WTC11 (cell line): ENCODE measurements at regions of chr14 and their contacts with region 1.

Region 1: GRCh38 chr14:72023722-72024407 is 91.6 kb downstream of the RGS6 start:
- DNase-seq: peak; percentile 44
- ATAC-seq: peak; percentile 82
- H3K4me3 Mint-ChIP-seq: peak overlapping the region; percentile 16; the same call in 1 of the 2 replicates
- H3K27ac Mint-ChIP-seq: no peak overlapping the region
- H3K4me1 Mint-ChIP-seq: peaks cover 8% of the 10 kb centered on the region
- H3K27me3 Mint-ChIP-seq: no peaks in the 10 kb centered on the region; the same call in 1 of the 2 replicates
- CTCF ChIP-seq: peak; percentile 74

Region 2: DNA sequence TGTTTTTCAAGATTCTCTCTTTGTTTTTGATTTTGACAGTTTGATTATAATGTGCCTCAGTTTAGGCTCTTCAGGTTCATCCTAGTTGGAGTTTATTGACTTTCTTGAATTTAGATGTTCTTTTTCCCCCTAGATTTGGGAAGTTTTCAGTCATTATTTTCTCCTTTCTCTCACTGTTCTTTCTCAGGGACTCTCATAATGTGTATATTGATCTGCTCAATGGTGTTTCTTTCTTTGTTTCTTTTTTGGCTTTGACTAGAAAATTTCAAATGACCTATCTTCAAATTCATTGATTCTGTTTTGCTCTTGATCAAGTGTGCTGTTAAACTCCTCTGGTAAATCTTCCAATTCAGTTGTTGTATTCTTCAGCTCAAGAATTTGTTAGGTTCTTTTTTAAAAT is 16.7 kb after region 1 on chr14:
- CTCF ChIA-PET with region 1: no interaction called
- POLR2A ChIA-PET with region 1: no interaction called
- DNase-seq: no peak
- ATAC-seq: no peak
- H3K4me3 Mint-ChIP-seq: no peak overlapping the region
- H3K27ac Mint-ChIP-seq: no peak overlapping the region
- H3K4me1 Mint-ChIP-seq: peaks cover 14% of the 10 kb centered on the region
- H3K27me3 Mint-ChIP-seq: no peaks in the 10 kb centered on the region; the same call in 1 of the 2 replicates
- CTCF ChIP-seq: no peak

Region 3: DNA sequence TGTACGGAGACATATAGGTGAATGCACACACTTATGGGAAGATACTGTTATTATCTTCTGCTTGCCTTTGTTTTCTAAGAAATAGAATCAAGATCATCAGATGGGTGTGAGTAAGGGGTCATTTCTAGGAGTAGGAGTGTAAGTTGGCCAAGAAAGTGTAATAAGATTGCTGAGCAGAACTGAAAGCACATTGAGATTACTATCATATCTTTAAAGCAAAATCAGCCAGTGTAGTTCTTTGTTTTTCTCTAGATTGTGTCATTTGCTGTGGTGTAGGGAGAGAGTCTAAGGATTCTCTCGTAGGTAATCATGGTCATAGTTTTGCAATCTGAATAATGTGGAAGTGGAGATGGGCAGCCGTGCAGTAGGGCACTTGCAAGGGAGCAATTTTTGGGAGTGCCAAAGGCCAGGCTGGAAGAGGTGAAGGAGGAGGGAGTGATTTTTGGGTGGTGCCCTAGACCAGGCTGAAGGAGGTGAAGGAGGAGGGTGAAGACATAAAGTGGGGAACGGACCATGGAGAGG is 40.0 kb after region 1 on chr14:
- CTCF ChIA-PET with region 1: no interaction called
- POLR2A ChIA-PET with region 1: no interaction called
- DNase-seq: no peak
- ATAC-seq: no peak
- H3K4me3 Mint-ChIP-seq: no peak overlapping the region
- H3K27ac Mint-ChIP-seq: no peak overlapping the region; the same call in 1 of the 2 replicates
- H3K4me1 Mint-ChIP-seq: peaks cover 3% of the 10 kb centered on the region
- H3K27me3 Mint-ChIP-seq: no peaks in the 10 kb centered on the region; the same call in 1 of the 2 replicates
- CTCF ChIP-seq: no peak

Region 4: GRCh38 chr14:72420725-72421474 is 397.0 kb after region 1 on chr14:
- CTCF ChIA-PET with region 1: interaction called, 19 read pairs
- POLR2A ChIA-PET with region 1: no interaction called
- DNase-seq: peak; percentile 94
- ATAC-seq: peak; percentile 81
- H3K4me3 Mint-ChIP-seq: peak overlapping the region; percentile 18; the same call in 1 of the 2 replicates
- H3K27ac Mint-ChIP-seq: 0 out of 2 replicates have a peak overlapping the region, but pooled peaks have one; percentile 6
- H3K4me1 Mint-ChIP-seq: peaks cover 14% of the 10 kb centered on the region
- H3K27me3 Mint-ChIP-seq: no peaks in the 10 kb centered on the region; the same call in 1 of the 2 replicates
- CTCF ChIP-seq: peak; percentile 98